Activated CD4-positive, alpha-beta T cell treated with anti-CD3 and anti-CD28 coated beads for 36 hours (primary cell): ENCODE measurements at regions of chr11 and their contacts with region 1.

Region 1: DNA sequence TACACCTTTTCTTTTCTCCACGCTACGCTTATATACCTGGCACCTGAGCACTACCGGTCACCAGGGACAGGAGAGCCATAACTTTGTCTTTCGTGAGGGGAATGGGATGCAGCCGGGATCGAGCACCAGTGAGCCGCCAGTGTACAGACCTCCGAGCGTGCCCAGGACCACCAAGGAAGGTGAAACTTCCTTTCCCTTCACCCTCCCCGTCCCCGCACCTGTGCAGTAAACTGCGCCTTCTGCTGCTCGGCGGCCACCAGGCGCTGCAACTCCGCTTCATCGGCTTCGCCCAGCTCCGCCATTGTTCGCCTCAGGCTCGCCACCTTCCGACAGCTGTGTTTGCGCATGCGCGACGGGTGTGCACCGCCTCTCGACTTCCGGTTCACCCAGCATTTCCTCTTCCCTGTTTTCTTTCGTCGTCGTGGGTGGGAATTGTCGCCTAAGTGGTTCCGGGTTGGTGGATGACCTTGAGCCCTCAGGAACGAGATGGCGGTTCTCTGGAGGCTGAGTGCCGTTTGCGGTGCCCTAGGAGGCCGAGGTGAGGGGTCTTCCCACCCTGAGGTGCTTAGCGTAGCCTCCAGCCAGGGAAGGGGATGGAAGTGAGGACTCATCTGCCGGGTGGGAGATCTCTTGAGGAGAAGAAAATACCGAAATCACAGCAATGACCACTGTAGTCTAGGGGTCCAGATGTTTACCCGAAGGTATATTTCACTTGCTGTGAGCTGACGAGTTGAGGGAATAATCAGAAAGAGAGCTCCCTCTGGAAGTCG is at the starts of genes SDHD and TIMM8B:
- DNase-seq: peak; percentile 97
- ATAC-seq: peak; percentile 86
- H3K4me3 Mint-ChIP-seq: peak within 1 kb of the TSS; percentile 97
- H3K27ac Mint-ChIP-seq: peak within 1 kb of the TSS; percentile 93
- H3K4me1 Mint-ChIP-seq: peaks cover 63% of the 10 kb centered on the region
- H3K27me3 Mint-ChIP-seq: no peaks in the 10 kb centered on the region
- total RNA-seq, gene SDHD: 79.8 to 84.9 TPM
- total RNA-seq, gene TIMM8B: 50.5 to 52.6 TPM

Region 2: DNA sequence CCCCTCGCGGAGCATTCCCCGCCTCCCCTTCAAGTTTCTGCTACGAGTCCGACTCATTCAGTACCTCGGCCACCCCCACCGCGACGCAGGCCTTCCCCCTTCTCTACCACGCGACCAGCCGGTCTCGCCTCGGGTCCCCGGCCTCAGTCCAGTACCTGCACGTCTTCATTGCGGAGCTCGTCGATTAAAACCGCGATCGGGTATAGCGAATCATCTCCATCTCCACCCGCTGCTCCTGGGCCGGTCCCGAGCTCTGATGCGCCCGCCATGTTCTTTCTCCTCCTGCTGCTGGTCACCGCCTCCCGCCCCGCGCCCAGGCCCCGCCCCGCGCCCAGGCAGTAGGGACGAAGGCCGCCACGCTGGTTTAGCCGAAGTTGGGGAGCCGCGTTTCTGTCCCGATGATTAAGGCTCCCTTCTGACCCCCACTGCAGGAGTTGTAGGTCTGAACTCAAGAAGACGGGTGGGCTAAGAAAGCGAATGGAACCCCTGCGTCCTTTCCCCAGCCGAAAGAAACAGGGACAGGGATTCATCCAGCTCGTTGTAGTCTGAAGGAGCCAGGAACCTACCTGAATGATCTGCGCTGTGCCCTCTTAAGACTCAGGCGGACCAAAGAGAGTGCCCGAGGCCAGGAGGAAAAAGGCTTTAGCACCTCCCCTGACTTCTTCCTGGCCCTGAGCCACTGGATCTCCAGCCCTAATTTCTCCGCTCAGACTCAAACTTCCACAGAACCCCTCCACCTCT is 320.3 kb before region 1 on chr11 and contains the start of gene PPP2R1B:
- CTCF ChIA-PET with region 1: interaction called, 4 read pairs
- POLR2A ChIA-PET with region 1: interaction called, 3 read pairs
- intact Hi-C with region 1: loop called in 1 of 2 experiments (anchors 2 kb)
- DNase-seq: peak; percentile 85
- ATAC-seq: peak; percentile 95
- H3K4me3 Mint-ChIP-seq: peak within 1 kb of the TSS; percentile 85
- H3K27ac Mint-ChIP-seq: peak within 1 kb of the TSS; percentile 98
- H3K4me1 Mint-ChIP-seq: peaks cover 32% of the 10 kb centered on the region
- H3K27me3 Mint-ChIP-seq: no peaks in the 10 kb centered on the region
- total RNA-seq, gene PPP2R1B: 39.1 to 53.9 TPM

Region 3: DNA sequence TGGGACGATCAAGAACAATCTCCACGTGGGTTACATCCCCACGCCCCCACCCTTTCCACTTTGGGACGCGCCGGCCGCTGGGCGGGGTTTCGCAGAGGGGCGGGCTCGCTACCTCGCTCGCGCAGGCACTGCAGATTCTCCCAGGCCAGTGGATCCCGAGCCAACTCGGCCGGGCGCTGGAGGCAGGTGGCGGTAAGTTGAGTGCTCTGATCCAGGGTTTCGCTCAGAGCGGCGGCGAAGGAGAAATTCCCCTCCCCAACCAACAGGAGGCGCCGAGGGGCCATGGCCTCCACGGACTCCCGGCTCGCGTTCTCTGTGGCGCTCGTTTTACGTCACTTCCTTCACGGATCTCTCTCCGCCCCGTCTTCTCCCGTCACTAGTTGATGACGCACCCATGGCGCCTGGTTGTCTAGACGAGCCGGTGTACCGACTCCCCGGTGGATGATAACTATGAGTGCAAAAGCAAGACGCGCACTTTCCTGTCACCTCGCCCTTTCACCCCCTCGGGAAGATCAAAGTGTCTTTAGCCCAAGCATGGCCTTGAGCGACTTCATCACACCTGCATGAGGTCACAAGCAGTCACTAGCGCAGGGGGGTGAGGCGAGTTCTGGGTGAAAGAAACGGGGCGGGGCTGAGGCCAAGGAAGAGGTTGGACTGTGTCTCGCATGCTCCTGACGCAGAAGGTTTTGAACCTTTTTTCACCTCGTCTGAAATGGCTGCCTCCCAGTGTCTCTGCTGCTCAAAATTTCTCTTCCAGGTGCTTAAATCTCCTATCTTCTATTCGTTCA is 207.6 kb before region 1 on chr11 and contains the starts of genes CFAP68 and FDXACB1:
- CTCF ChIA-PET with region 1: interaction called, 4 read pairs
- POLR2A ChIA-PET with region 1: no interaction called
- intact Hi-C with region 1: loop called (anchors 1 kb)
- DNase-seq: peak; percentile 97
- ATAC-seq: peak; percentile 92
- H3K4me3 Mint-ChIP-seq: peak within 1 kb of the TSS; percentile 78
- H3K27ac Mint-ChIP-seq: peak within 1 kb of the TSS; percentile 96
- H3K4me1 Mint-ChIP-seq: peaks cover 26% of the 10 kb centered on the region
- H3K27me3 Mint-ChIP-seq: no peaks in the 10 kb centered on the region
- total RNA-seq, gene CFAP68: 32.1 to 49.7 TPM
- total RNA-seq, gene FDXACB1: 5.9 to 6.0 TPM

Region 4: GRCh38 chr11:112024773-112025678 is 61.6 kb before region 1 on chr11 and contains the start of gene DLAT:
- CTCF ChIA-PET with region 1: interaction called, 3 read pairs
- POLR2A ChIA-PET with region 1: no interaction called
- intact Hi-C with region 1: loop called (anchors 1 to 2 kb)
- DNase-seq: peak; percentile 93
- ATAC-seq: peak; percentile 90
- H3K4me3 Mint-ChIP-seq: peak within 1 kb of the TSS; percentile 96
- H3K27ac Mint-ChIP-seq: peak within 1 kb of the TSS; percentile 100
- H3K4me1 Mint-ChIP-seq: peaks cover 19% of the 10 kb centered on the region
- H3K27me3 Mint-ChIP-seq: no peaks in the 10 kb centered on the region
- total RNA-seq, gene DLAT: 47.8 to 49.1 TPM

Region 5: GRCh38 chr11:112074026-112074811 is 12.4 kb before region 1 on chr11 and contains the start of gene NKAPD1:
- CTCF ChIA-PET with region 1: no interaction called
- POLR2A ChIA-PET with region 1: interaction called, 3 read pairs
- intact Hi-C with region 1: loop called (anchors 1 kb)
- DNase-seq: peak; percentile 86
- ATAC-seq: peak; percentile 92
- H3K4me3 Mint-ChIP-seq: peak within 1 kb of the TSS; percentile 94
- H3K27ac Mint-ChIP-seq: peak within 1 kb of the TSS; percentile 93
- H3K4me1 Mint-ChIP-seq: peaks cover 26% of the 10 kb centered on the region
- H3K27me3 Mint-ChIP-seq: peaks cover 11% of the 10 kb centered on the region
- total RNA-seq, gene NKAPD1: 23.7 to 45.3 TPM

Region 6: DNA sequence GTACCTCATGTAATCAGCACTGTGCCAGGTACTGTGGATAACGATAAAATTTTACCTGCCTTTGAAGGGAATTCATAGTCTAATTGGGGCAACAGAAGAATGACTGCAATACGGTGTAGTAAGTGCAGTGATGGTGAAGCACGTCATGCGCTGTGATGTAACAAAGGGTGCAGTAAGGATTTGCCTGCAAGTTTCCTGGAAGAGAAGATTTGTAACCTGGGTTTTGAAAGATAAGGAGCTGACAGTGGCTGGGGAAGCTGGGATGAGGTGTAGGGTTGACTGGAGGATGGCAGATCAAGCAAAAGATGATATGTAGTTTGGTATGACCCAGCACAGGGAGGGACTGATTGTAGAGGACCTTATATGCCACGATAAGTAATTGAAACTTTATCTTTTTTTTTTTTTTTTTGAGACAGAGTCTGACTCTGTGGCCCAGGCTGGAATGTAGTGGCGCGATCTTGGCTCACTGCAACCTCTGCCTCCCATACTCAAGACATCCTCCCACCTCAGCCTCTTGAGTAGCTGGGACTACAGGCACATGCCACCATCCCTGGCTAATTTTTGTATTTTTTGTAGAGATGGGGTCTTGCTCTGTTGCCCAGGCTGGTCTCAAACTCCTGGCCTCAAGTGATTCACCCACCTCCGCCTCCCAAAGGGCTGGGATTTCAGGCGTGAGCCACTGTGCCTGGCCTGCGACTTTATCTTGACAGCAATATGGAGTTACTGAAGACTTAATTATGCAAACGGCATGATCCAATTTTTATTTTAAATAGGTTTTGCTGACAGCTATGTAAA is 11.3 kb after region 1 on chr11:
- CTCF ChIA-PET with region 1: no interaction called
- POLR2A ChIA-PET with region 1: no interaction called
- intact Hi-C with region 1: no loop called
- DNase-seq: no peak
- ATAC-seq: no peak
- H3K4me3 Mint-ChIP-seq: no peak overlapping the region
- H3K27ac Mint-ChIP-seq: no peak overlapping the region
- H3K4me1 Mint-ChIP-seq: no peaks in the 10 kb centered on the region
- H3K27me3 Mint-ChIP-seq: no peaks in the 10 kb centered on the region

Region 7: DNA sequence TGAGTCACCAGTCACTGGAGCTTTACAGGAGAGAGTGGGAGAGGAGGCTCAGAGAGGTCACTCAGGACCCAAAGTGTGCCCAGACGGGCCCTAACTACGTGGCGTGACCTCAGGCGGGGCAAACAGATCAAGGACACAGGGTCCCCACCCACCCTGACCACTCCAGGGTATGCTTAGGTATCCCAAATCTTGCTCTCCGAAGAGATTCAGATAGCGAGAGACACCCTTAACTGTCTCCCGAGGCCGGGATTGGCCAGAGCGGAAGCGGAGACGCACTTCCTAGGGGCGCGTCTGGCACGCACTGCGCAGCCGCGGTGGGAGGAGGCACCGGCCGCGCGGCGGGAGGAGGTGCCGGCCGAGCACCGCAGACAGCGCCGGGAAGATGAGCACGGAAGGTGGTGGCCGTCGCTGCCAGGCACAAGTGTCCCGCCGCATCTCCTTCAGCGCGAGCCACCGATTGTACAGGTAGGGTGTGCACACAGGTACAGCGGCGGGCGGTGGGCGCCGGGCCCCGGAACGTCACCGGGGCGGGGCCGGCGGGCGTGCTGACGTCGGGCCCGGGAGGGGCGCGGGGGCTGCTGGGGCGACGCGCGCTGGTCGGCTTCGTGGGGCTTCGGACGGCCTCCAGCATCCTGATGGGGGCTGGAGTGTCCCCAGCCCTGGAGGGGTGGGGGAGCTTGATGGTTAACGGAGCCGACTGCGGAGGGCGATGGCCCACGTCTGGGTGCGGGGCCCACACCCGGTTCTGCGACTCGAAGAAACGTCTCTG is 139.6 kb after region 1 on chr11 and contains the start of gene PTS:
- CTCF ChIA-PET with region 1: no interaction called
- POLR2A ChIA-PET with region 1: no interaction called
- intact Hi-C with region 1: loop called in 1 of 2 experiments (anchors 1 kb)
- DNase-seq: peak; percentile 90
- ATAC-seq: peak; percentile 97
- H3K4me3 Mint-ChIP-seq: peak within 1 kb of the TSS; percentile 78
- H3K27ac Mint-ChIP-seq: peak within 1 kb of the TSS; percentile 94
- H3K4me1 Mint-ChIP-seq: peaks cover 19% of the 10 kb centered on the region
- H3K27me3 Mint-ChIP-seq: no peaks in the 10 kb centered on the region
- total RNA-seq, gene PTS: 17.4 to 23.8 TPM

Region 8: GRCh38 chr11:113314389-113315301 is 1228.0 kb after region 1 on chr11 and contains the start of gene TTC12:
- CTCF ChIA-PET with region 1: no interaction called
- POLR2A ChIA-PET with region 1: no interaction called
- intact Hi-C with region 1: loop called in 1 of 2 experiments (anchors 5 kb)
- DNase-seq: peak; percentile 97
- ATAC-seq: peak; percentile 99
- H3K4me3 Mint-ChIP-seq: peak within 1 kb of the TSS; percentile 77
- H3K27ac Mint-ChIP-seq: peak within 1 kb of the TSS; percentile 82
- H3K4me1 Mint-ChIP-seq: peaks cover 24% of the 10 kb centered on the region
- H3K27me3 Mint-ChIP-seq: no peaks in the 10 kb centered on the region
- total RNA-seq, gene TTC12: 16.3 to 17.6 TPM